Left ventricle myocardium superior (tissue), 1 donor: ENCODE measurements at regions of chr22 and their contacts with region 1.

Region 1: GRCh38 chr22:50276143-50276542 is 6.0 kb upstream of the MAPK11 start:
- DNase-seq: peak; percentile 82
- ATAC-seq: peak; percentile 87

Region 2: GRCh38 chr22:50326959-50327710 is 51.0 kb after region 1 on chr22 and contains the start of gene DENND6B:
- intact Hi-C with region 1: loop called (anchors 10 kb)
- DNase-seq: peak; percentile 94
- ATAC-seq: peak; percentile 97
- total RNA-seq, gene DENND6B: 1.4 TPM

Region 3: DNA sequence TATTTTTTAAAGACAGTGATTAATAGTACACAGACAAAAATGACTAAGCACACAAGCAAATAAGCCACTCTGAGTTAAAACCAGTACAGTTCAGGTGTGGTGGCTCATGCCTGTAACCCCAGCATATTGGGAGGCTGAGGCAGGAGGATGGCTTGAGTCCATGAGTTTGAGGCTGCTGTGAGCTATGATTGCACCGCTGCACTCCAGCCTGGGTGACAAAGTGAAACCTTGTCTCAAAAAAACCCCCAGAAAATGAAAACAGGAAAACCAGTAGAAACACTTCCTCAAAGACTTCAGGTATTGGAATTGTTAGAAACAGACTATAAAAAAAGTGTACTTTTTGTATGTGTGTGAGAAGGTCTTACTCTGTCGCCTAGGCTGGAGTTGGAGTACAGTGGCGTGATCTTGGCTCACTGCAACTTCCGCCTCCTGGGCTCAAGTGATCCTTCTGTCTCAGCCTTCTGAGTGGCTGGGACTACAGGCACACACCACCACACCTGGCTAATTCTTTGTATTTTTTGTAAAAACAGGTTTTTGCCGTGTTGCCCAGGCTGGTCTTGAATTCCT is 100.0 kb after region 1 on chr22:
- intact Hi-C with region 1: no loop called
- DNase-seq: no peak
- ATAC-seq: no peak